ENCODE measurements at regions of chr4 and their contacts with region 1.

Region 1: DNA sequence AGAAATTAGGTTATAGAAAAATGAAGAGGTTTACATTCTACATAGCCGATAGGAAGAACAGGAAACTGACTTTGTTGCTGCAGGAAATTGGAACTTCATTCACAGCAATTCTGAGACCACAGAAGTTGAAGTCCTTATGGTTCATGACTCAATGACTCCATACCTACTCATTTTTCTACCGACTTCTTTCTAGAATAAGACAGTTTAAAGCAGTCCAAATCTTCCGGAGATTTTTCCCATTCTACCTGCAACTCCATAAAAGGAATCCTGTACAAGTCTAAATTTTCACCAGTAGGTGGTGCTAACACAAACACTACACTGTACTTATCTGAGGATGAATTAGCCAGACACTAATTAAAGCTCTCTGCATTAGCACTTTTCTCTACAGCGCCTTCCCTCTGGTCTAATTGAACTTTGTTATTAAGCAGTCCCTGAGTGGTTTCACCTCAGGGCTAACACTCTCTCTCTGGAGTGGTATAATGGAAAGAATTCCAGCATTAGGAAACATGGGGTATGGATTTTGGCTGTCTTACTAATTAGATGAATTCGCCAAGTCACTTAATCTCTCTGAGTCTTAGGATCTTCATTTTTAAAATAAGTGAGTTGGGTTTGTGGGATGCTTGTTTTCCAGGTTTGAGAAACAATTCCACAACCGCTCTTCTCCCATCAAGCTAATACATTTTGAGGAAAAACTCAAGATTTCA is 167.9 kb downstream of the SMIM20 start:
- DNase-seq: peak in 1 of 3 donors; percentile 49
- ATAC-seq: peak; percentile 74
- H3K4me3 ChIP-seq: no peak overlapping the region
- H3K4me1 ChIP-seq: no peaks in the 10 kb centered on the region
- CTCF ChIP-seq: peak; percentile 43

Region 2: DNA sequence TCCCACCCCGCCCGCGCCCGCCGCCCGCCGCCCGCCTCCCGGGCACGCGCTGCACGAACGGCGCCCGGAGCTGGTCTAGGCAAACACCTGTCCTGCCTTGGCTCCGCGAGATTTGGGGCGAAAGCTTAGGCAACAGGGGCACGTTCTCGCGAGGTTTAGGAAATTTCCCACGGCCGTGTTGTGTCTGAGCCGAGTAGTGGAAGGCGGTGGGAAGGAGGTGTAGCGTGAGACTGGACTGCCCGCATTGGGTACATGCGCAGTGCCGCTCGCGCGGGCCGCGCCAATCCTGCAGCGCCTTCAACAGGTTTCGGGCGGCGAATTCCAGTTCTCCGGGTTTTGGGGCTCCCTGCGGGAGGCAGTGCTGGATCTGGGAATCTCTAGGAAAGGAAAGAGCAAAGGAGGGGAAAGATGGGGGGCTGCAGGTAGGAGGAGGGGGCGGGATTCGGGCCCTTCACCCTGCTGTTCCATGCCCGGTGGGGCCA is 237.6 kb after region 1 on chr4:
- intact Hi-C with region 1: loop called in 1 of 2 experiments (anchors 10 kb)
- DNase-seq: peak; percentile 99
- ATAC-seq: peak; percentile 89
- H3K4me3 ChIP-seq: peak overlapping the region; percentile 43
- H3K4me1 ChIP-seq: no peaks in the 10 kb centered on the region
- CTCF ChIP-seq: no peak

Region 3: DNA sequence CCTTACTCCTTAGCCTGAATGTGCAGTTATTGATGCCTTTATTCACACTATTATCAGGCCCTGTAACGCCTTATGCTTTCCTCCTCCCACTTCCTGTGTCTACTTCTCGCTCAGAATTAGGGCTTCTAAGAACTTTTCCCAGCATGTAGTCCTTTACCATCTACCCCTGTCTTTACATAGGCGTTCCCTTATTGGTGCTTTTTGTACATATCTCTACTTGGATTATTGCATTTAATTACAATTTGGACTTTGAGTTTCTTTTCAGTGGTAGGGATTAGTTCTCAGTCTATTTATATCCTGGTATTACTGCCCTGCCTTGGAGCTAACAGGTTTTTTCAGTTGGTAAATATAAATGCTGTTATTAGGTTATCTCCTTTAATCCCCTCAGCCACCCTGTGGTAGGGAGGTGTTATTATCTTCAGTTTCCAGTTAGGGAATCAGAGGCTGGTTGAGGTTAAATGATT is 322.8 kb after region 1 on chr4:
- intact Hi-C with region 1: loop called in 1 of 2 experiments (anchors 10 kb)
- DNase-seq: no peak
- ATAC-seq: no peak
- H3K4me3 ChIP-seq: no peak overlapping the region
- H3K4me1 ChIP-seq: no peaks in the 10 kb centered on the region
- CTCF ChIP-seq: no peak